Gastrocnemius medialis (tissue), 4 donors: ENCODE measurements at regions of chr19 and their contacts with region 1.

Region 1: DNA sequence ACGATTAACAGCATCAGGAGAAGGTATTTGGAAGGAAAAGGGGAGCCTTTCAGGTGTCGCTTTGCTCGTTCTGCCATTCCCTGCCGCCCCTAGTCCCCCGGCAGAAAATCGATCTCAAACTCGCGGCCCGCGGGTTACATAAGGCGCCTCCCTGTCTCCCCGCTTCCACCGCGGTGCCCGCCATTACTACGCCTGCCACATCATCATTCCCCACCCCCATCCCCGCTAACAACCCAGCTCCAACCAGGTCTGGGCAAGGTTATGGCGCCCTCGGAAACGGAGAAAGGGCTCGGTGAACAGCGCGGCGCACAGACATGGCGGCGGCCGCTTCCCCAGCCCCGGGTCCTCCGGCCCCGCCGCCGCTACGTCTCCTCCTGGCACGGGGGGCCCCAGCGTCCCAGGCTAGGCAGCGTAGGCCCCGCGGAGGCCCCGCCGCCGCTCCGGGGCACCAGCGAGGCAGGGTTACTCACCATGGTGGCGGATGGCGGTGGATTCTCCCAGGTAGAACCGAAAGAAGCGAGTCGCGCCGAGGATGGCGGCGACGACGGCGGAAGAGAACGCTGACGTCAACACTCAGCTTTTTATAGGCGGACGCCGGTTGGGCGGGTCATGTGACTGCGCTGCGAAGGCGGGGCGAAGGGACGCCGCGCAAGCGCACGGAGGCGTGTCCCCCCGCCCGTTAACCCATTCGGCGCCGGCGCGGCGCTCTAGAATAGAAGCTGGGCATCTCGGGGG is at the start of gene EEF2:
- DNase-seq: peak; percentile 77 to 86
- ATAC-seq: peak; percentile 49 to 61
- H3K4me3 ChIP-seq: peak within 1 kb of the TSS; percentile 79 to 99 (median 80)
- H3K27ac ChIP-seq: peak within 1 kb of the TSS; percentile 89 to 100 (median 92)
- H3K4me1 ChIP-seq: peaks cover 39 to 44% of the 10 kb centered on the region in 2 donors
- H3K27me3 ChIP-seq: no peaks in the 10 kb centered on the region
- CTCF ChIP-seq: peak in 1 of 5 experiments; percentile 28
- POLR2A ChIP-seq: peak; percentile 100
- total RNA-seq, gene EEF2: 1,701 to 2,714 (median 2,440) TPM

Region 2: DNA sequence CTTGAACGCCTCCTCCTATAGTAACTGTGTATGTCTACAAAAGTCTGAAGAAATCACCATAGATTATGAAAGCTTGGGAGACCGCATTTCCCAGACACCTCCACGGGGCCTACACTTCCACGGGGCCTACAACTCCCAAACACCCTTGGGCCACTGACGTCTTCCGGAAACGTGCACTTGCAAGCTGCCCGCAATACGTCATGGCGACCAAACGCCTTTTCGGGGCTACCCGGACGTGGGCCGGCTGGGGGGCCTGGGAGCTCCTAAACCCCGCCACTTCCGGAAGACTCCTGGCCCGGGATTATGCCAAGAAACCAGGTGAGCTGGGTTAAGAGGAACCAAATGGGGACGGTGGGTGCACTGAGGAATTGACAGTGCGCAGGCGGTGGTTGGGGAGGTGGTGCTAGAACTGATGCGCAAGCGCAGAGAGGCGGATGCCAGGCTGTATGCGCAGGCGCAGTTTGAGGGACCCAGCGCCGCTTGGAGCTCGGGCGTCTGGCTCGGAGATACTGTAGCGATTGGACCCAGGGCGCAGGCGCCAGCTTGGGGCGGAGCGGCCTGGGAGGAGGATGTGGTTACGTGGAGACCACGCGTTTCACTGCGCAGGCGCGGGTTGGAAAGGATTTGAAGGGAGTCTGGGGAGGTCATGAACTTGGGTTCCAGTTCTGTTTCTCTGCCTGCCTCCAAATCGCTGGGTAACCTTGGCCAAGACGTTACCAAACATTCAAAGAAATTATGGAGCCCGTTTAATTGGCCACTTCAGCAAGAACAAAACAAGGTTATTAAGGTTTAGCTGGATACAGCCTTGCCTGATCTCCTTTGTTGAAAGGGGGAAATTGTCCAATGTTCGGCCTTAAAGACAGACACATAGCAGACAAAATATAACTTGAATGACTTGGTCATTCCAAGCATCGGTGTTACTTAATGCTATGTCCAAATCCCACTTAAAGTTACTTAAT is 222.3 kb before region 1 on chr19 and contains the start of gene MRPL54:
- in situ Hi-C with region 1: no loop called
- intact Hi-C with region 1: loop called (anchors 2 kb)
- DNase-seq: peak; percentile 98 to 99
- ATAC-seq: peak; percentile 95 to 96
- H3K4me3 ChIP-seq: peak within 1 kb of the TSS; percentile 83 to 97 (median 90)
- H3K27ac ChIP-seq: peak within 1 kb of the TSS; percentile 92 to 100 (median 98)
- H3K4me1 ChIP-seq: peaks cover 21 to 22% of the 10 kb centered on the region in 2 donors
- H3K27me3 ChIP-seq: no peaks in the 10 kb centered on the region
- CTCF ChIP-seq: no peak
- POLR2A ChIP-seq: peak; percentile 68 to 78
- total RNA-seq, gene MRPL54: 23.3 to 86.3 (median 63.3) TPM

Region 3: DNA sequence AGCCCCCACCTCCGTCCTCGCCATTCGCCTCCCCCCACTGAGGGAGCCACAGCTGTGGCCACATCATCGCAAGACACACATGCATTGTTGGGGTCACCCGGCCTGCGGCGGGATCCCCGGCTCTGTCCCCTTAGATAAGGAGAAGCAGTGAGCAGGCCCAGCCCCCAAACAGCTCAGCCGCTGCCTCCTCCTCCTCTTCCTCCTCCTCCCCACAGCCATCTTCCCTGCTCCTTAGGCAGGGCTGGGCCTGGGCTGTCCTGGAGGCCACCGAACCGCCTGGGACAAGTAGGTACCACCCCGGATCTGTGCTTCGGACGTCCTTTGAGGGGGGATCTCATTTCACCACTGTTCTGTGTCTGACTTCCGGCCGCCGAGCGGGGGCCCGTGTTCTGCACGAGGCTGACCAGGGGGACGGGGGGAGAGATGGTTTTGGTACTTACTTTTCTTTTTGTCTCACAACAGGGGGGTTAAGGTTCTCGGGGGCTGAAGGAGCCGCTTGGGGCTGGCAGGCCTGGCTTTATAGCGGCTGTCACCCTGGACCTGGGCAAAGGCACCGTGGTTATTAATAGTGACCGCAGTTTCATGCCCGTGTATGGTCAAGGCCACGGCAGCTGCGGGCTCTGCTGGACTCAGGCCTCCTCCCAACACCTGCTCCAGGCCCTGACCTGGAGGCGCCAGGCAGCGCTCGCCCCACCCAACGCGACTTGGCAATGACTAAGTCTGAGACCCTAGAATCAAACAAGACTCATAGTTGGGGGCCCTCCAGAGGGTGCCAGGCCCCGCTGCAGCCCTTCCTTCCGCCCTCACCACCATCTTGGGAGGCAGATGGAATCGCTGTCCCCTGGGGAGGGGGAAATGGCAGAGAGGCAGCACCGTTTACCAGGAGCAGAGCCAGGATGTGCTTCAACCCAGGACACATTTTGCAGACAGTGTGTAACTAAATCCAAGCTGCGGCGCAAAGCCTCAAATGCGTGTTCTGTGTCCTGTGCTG is 33.9 kb before region 1 on chr19:
- in situ Hi-C with region 1: no loop called
- intact Hi-C with region 1: loop called (anchors 2 kb)
- DNase-seq: peak; percentile 92 to 97
- ATAC-seq: peak; percentile 61 to 71
- H3K4me3 ChIP-seq: peak overlapping the region; percentile 74 to 85 (median 80)
- H3K27ac ChIP-seq: peak overlapping the region; percentile 98 to 99 (median 99)
- H3K4me1 ChIP-seq: peaks cover 32 to 48% of the 10 kb centered on the region in 2 donors
- H3K27me3 ChIP-seq: no peaks in the 10 kb centered on the region
- CTCF ChIP-seq: no peak
- POLR2A ChIP-seq: peak; percentile 87 to 92

Region 4: DNA sequence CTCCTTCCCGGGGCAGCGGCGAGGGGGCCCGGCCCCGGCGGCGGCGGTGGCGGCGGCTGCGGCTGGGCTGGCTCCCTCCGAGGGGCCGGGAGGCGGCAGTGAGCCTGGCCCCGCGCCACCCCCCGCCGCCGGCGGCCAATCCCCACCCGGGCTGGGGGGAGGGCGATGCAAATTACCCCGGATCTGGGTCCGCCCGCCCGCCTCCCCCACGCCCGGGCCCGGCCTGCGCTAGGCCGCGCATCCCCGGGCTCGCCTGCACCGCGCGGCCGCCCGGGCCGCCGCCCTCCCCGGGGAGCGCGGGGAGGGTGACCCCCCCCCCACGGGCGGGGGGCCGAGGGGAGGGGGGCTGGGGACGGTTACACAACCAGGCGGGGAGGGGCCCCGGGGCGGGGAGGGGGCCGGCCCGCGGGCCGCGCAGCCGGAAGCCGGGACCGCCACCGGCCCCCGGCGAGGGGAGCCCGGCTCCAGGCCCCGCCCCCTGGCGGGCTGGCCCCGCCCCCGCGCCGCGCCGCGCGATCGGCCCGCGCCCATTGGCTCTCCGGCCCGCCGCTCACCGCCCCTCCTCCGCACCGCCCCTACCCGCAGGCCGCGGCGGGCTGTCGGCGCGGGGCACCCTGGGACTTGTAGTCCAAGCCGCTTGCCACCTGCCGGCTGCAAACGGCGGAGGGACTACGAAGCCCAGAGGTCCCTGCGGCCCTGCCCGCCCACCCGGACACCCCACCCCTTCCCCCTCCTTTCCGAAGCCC is 80.5 kb after region 1 on chr19:
- in situ Hi-C with region 1: loop called in 1 of 4 experiments (anchors 10 kb)
- intact Hi-C with region 1: loop called (anchors 2 kb)
- DNase-seq: peak; percentile 96
- ATAC-seq: peak; percentile 57 to 59
- H3K4me3 ChIP-seq: peak overlapping the region; percentile 85 to 100 (median 97)
- H3K27ac ChIP-seq: peak overlapping the region; percentile 85 to 100 (median 100)
- H3K4me1 ChIP-seq: peaks cover 37 to 38% of the 10 kb centered on the region in 2 donors
- H3K27me3 ChIP-seq: no peaks in the 10 kb centered on the region
- CTCF ChIP-seq: no peak
- POLR2A ChIP-seq: peak in 1 of 2 donors; percentile 57

Region 5: GRCh38 chr19:4139614-4140236 is 154.7 kb after region 1 on chr19:
- in situ Hi-C with region 1: loop called in 1 of 4 experiments (anchors 10 kb)
- intact Hi-C with region 1: loop called (anchors 1 kb)
- DNase-seq: peak; percentile 37 to 63
- ATAC-seq: peak; percentile 62 to 87
- H3K4me3 ChIP-seq: no peak overlapping the region
- H3K27ac ChIP-seq: no peak overlapping the region
- H3K4me1 ChIP-seq: peaks cover 0 to 4% of the 10 kb centered on the region in 2 donors
- H3K27me3 ChIP-seq: no peaks in the 10 kb centered on the region
- CTCF ChIP-seq: peak; percentile 42 to 85 (median 71)
- POLR2A ChIP-seq: no peak

Region 6: GRCh38 chr19:4342615-4343369 is 357.7 kb after region 1 on chr19:
- in situ Hi-C with region 1: no loop called
- intact Hi-C with region 1: loop called (anchors 10 kb)
- DNase-seq: peak; percentile 98 to 99
- ATAC-seq: peak; percentile 97 to 98
- H3K4me3 ChIP-seq: peak overlapping the region; percentile 64 to 78 (median 68)
- H3K27ac ChIP-seq: peak overlapping the region; percentile 89 to 96 (median 94)
- H3K4me1 ChIP-seq: peaks cover 10 to 20% of the 10 kb centered on the region in 2 donors
- H3K27me3 ChIP-seq: no peaks in the 10 kb centered on the region
- CTCF ChIP-seq: peak in 1 of 5 experiments; percentile 16
- POLR2A ChIP-seq: peak; percentile 73 to 85

Region 7: DNA sequence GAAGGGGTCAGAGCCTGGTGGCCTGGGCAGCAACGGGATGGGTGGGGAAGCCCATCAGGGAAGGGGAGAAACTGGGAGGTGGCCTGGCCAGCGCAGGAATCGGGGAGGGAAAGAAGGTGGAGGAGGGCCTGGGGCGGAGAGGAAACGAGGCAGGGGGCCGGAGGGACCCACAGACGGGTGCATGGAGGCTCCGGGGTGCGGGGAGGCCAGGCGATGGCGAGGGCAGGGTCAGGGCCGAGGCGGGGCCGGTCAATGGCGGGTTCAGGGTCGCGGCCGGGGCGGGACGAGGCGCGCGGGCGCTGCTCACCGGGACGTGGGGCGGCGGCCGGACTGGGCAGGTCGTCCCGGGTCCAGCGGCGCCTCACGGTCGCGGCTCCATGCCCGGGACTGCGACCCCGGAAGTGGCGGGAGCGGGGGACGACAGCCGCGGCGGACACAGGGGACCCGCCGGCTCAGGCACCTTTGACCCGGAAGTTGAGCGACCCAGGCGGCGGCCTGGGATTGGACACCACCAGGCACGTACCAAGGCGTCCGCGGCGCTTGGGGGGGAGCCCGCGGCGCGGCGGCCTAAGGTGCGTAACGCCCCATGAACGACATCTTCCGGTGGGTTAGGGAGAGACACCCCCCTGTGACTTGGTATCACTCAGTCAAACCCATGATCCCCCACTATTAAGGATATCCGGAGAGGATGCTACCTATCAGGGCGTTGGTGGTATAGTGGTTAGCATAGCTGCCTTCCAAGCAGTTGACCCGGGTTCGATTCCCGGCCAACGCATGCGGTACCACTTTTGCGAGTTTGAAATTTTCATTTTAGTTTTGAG is 738.5 kb after region 1 on chr19 and contains the start of gene DPP9:
- in situ Hi-C with region 1: no loop called
- intact Hi-C with region 1: no loop called
- DNase-seq: peak; percentile 97 to 99
- ATAC-seq: peak; percentile 92 to 94
- H3K4me3 ChIP-seq: peak within 1 kb of the TSS; percentile 76 to 100 (median 94)
- H3K27ac ChIP-seq: peak within 1 kb of the TSS; percentile 79 to 99 (median 96)
- H3K4me1 ChIP-seq: peaks cover 12 to 18% of the 10 kb centered on the region in 2 donors
- H3K27me3 ChIP-seq: no peaks in the 10 kb centered on the region
- CTCF ChIP-seq: peak in 4 of 5 experiments; percentile 18 to 68 (median 38)
- POLR2A ChIP-seq: peak; percentile 93 to 97
- total RNA-seq, gene DPP9: 92.6 to 208 (median 148) TPM